OCI-LY7 (cell line): ENCODE measurements at regions of chr2 and their contacts with region 1.

Region 1: DNA sequence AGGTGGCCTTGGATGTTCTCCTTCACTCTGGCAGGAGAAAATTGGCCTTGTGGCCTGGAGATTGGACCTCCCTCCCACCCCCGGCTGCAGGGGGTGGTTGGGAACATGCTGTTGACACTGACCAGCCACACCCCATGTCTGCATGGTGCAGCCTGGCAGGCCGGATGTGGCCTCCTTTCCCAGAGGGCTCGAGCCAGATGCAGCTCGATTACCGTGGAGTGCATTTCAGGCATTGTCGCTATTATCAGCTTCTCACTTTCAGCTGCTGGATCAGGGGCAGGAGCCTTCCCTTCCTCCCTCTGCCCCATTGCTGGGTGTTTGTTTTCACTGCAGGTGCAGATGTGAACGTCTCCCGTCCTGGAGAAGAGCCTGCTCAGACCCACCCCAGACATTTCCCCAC is 211.0 kb upstream of the SIX2 start:
- DNase-seq: no peak
- H3K4me3 ChIP-seq: no peak overlapping the region
- H3K27ac ChIP-seq: no peak overlapping the region
- H3K4me1 ChIP-seq: peaks cover 49% of the 10 kb centered on the region
- CTCF ChIP-seq: no peak

Region 2: DNA sequence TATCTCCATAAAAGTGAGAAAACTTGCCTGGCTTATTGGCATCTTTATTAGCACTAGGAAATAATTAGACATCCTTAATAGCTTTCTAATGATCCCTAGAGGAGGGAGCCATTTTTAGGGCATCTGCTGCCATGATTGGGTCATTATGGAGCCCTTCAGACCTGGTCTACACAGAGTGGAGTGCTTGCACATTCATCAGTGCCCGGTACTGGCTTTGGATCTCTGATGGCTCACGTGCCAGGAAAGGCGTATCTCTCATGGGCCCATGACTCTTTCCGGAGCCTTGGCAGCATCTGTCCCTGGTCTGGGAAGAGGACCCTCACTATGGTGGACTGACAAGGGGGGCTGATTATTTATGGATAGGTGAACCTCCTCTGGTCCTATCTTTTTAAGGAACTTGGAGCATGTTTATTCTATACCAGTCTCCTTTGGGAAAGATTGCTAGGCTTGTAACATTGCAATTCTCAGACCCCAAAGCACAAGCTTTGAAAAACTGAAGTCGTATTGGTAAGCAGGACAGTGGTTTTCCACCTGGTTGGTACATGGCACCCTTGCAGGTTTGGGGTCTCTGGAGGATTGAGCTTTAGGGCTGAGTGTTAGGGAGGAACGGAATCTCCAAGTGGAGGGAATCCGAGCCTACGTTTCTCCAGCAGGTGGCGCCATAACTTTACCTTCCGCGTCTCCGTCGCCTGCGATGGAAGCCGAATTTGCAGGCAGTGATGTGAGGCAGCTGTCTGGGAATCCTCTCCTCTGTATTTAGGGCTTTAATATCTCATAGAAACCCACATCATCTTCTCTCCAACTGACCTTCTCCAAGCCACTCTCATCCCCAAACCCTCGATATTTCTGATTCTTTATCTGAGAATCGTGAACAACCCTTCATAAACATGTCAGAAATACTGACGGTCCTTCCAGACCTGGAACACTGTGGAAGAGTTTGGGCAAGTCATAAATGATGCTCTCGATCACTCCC is 238.8 kb before region 1 on chr2:
- CTCF ChIA-PET with region 1: no interaction called
- POLR2A ChIA-PET with region 1: no interaction called
- intact Hi-C with region 1: loop called (anchors 10 kb)
- DNase-seq: peak; percentile 87
- H3K4me3 ChIP-seq: no peak overlapping the region
- H3K27ac ChIP-seq: peak overlapping the region; percentile 37
- H3K4me1 ChIP-seq: peaks cover 21% of the 10 kb centered on the region
- CTCF ChIP-seq: peak; percentile 96

Region 3: DNA sequence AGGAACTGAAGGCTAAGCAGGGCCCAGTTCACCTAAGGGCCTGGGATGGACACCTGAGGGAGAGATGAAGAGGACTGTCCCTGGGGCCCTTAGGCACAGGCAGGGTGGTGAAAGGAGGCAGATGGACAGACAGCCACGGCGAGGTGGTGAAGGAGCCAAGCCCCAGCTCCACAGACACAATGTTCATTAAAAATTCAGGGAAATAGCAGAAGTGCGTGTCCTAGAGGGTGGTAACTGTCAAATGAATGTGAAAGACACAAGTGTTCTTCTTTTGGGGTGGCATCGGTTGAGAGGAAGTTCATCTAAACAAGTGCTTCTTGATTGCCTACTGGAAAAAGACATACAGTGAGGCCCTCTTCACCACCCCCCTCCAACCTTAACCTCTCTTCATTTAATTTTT is 134.7 kb before region 1 on chr2:
- CTCF ChIA-PET with region 1: no interaction called
- POLR2A ChIA-PET with region 1: no interaction called
- intact Hi-C with region 1: loop called (anchors 5 kb)
- DNase-seq: no peak
- H3K4me3 ChIP-seq: no peak overlapping the region
- H3K27ac ChIP-seq: no peak overlapping the region
- H3K4me1 ChIP-seq: peaks cover 44% of the 10 kb centered on the region
- CTCF ChIP-seq: no peak

Region 4: DNA sequence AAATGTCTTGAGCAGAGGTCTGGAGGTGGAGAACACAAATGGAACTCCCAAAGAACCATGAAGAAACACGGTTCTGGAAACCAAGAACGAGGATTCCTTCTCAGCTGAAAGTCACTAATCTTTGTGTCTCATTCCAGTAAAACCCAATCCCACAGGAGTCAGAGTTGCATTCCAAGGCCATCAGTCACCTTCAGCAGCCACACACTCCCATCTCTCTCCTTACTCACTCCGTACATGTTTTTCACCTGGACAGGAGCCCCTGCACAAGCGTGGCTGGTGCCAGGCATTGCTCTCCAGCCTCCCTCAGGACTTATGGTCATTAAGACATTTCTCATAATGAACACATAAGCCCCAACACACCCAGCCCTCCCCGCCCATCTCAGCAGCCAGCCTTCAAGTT is 35.6 kb before region 1 on chr2:
- CTCF ChIA-PET with region 1: no interaction called
- POLR2A ChIA-PET with region 1: interaction called, 3 read pairs
- intact Hi-C with region 1: loop called (anchors 2 kb)
- DNase-seq: no peak
- H3K4me3 ChIP-seq: no peak overlapping the region
- H3K27ac ChIP-seq: no peak overlapping the region
- H3K4me1 ChIP-seq: peaks cover 45% of the 10 kb centered on the region
- CTCF ChIP-seq: no peak

Region 5: GRCh38 chr2:45256867-45257641 is 36.8 kb after region 1 on chr2:
- CTCF ChIA-PET with region 1: no interaction called
- POLR2A ChIA-PET with region 1: no interaction called
- intact Hi-C with region 1: no loop called
- DNase-seq: no peak
- H3K4me3 ChIP-seq: no peak overlapping the region
- H3K27ac ChIP-seq: no peak overlapping the region
- H3K4me1 ChIP-seq: peaks cover 21% of the 10 kb centered on the region
- CTCF ChIP-seq: no peak